ENCODE measurements at regions of chr16 and their contacts with region 1.

Region 1: DNA sequence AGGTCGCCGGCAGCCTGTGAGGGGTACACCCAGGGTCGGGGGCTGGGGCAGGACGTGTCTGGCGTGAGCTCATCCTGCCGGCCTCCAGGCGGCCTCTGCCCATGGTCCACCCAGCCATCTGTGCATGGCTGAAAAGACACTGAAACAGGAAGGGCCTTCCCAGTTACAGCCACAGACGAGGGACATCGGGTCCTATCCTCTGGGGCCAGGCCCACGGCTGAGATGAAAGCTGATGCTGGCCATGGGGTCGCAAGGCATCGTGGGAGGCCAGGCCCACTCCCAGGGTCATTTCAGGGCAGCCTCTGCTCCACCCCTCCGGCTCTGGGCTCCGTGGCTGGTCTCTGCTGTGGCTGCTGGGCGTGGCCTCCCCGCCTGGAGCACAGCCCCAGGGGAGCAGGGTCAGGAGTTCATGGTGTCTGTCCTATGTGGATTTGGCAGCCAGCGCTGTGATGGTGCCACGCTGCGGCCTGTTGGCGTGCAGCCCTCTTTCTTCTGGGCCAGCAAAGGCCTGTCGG is 16.6 kb upstream of the ATP6V0C start:
- DNase-seq: no peak
- H3K4me3 ChIP-seq: no peak overlapping the region
- H3K27ac ChIP-seq: peak overlapping the region in 1 of 5 donors; percentile 24
- H3K4me1 ChIP-seq: peaks cover 14 to 39% (median 28%) of the 10 kb centered on the region in 4 donors
- H3K27me3 ChIP-seq: no peaks in the 10 kb centered on the region
- CTCF ChIP-seq: no peak
- EP300 ChIP-seq: no peak
- POLR2A ChIP-seq: no peak

Region 2: DNA sequence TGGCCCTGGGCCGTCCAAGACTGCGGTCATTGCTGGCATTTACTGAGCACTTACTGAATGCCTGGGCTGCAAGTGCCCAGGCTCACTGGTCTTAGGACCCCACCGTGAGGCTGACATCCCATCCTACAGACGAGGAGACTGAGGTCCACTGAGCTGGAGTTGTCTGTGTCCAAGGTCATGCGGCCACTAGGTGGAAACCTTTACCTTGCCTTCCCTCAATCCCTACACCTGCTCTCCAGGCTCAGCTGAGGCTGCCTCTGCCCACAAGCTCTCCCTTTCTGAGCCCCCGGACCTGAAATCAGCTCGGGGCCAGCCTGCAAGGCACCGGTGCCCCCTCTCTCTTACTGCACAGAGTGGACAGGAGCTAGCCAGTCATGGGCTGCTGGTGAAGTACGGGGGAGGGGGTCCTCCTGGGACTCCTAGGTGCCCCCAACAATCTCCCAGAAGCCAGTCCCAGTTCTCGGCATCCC is 302.3 kb before region 1 on chr16:
- intact Hi-C with region 1: loop called (anchors 10 kb)
- DNase-seq: peak; percentile 74 to 88
- H3K4me3 ChIP-seq: no peak overlapping the region
- H3K27ac ChIP-seq: no peak overlapping the region
- H3K4me1 ChIP-seq: peaks cover 13 to 21% (median 19%) of the 10 kb centered on the region in 4 donors
- H3K27me3 ChIP-seq: peaks cover 6 to 59% (median 37%) of the 10 kb centered on the region in 3 donors
- CTCF ChIP-seq: peak in 4 of 7 experiments; percentile 27 to 64 (median 56)
- EP300 ChIP-seq: no peak
- POLR2A ChIP-seq: no peak

Region 3: GRCh38 chr16:2340564-2341455 is 156.4 kb before region 1 on chr16 and contains the start of gene ABCA3:
- intact Hi-C with region 1: loop called (anchors 5 kb)
- DNase-seq: peak; percentile 94 to 98
- H3K4me3 ChIP-seq: peak within 1 kb of the TSS; percentile 71 to 93 (median 76)
- H3K27ac ChIP-seq: peak within 1 kb of the TSS in 4 of 5 donors; percentile 12 to 71 (median 48)
- H3K4me1 ChIP-seq: peaks cover 23 to 27% (median 23%) of the 10 kb centered on the region in 4 donors
- H3K27me3 ChIP-seq: peaks cover 0 to 22% (median 4%) of the 10 kb centered on the region in 3 donors
- CTCF ChIP-seq: peak in 6 of 7 experiments; percentile 79 to 100 (median 100)
- EP300 ChIP-seq: no peak
- POLR2A ChIP-seq: no peak
- total RNA-seq, gene ABCA3: 3.8 to 39.3 (median 4.9) TPM

Region 4: GRCh38 chr16:2365397-2366294 is 131.5 kb before region 1 on chr16:
- intact Hi-C with region 1: no loop called
- DNase-seq: no peak
- H3K4me3 ChIP-seq: no peak overlapping the region
- H3K27ac ChIP-seq: no peak overlapping the region
- H3K4me1 ChIP-seq: no peaks in the 10 kb centered on the region
- H3K27me3 ChIP-seq: no peaks in the 10 kb centered on the region
- CTCF ChIP-seq: no peak
- EP300 ChIP-seq: no peak
- POLR2A ChIP-seq: no peak